ENCODE measurements at regions of chr17 and their contacts with region 1.

Region 1: DNA sequence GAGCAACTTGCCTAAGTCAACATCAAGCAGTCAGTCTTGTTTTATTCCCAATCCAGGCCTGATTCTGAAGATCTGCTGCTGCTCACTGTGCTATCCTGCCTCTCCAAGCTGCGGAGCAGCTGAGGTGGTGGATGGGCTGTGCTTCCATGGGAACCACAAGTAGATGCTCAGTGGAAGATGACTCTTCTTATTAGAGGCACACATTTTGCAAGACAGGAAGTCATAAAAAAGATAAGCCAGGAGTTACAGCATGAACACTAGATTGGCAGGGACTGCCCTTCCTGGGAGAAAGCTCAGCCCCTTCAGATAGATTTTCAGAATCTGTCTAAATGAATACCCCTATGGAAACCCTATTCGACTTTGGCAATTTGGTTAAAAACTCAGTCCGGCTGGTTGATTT is 143.1 kb downstream of the SHISA6 start:
- DNase-seq: peak; percentile 96
- H3K4me3 ChIP-seq: no peak overlapping the region
- H3K27ac ChIP-seq: peak overlapping the region; percentile 77
- H3K4me1 ChIP-seq: peaks cover 56% of the 10 kb centered on the region
- H3K27me3 ChIP-seq: no peaks in the 10 kb centered on the region
- CTCF ChIP-seq: no peak

Region 2: DNA sequence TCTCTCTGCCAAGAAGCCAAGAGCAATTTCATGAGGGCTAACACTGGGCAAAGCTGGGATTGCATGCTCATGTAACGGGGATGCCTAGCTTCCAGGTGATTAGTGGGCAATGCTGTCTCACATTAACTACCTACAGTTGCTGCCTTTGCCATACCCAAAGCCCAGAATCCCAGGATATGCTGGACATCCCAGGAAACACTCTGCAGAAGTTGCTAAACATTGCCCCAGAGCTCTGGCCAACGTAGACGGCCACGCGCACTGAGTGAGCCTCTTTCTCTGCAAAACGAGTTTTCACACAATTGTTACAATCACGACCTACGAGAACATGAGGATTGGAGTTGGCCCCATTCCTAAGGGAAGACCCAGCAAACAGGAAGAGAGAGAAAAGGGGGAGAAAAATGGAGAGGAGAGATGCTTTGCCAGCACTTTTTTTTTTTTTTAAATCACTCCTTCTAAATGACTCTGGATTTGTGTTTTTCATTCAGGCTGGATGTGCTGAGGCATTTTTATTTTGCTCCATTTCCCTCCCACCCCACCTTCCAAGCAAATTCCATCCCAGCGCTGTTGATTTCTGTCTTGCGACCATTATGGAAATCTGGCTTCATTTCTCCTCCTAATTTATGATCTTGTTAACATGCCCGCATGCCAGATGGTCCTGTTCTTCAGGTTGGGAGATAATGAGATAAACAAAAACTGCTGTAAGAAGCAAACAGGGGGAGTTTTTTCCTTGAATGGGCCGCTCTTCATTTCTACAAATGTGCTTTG is 101.4 kb after region 1 on chr17:
- CTCF ChIA-PET with region 1: no interaction called
- POLR2A ChIA-PET with region 1: no interaction called
- intact Hi-C with region 1: loop called (anchors 5 kb)
- DNase-seq: no peak
- H3K4me3 ChIP-seq: no peak overlapping the region
- H3K27ac ChIP-seq: peak overlapping the region; percentile 68
- H3K4me1 ChIP-seq: peaks cover 55% of the 10 kb centered on the region
- H3K27me3 ChIP-seq: no peaks in the 10 kb centered on the region
- CTCF ChIP-seq: no peak

Region 3: DNA sequence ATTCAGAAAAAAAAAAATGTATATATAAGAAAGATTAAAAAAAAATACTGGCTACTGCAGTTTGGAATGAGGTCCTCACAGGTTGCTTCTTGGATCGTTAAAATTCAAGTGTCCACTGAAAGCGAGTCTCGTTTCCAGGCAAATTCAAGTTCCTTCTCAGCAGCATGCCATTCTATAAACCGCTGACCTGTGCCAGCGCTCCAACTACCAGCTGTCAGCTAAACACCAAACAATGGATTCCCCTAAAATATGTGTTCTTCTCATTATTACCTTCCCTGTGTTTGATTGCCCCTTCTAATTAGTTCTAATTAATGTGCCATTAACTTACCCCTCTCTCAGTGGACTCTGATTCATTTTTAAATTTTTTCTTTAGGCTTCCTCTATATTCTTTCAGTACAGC is 306.6 kb after region 1 on chr17:
- CTCF ChIA-PET with region 1: no interaction called
- POLR2A ChIA-PET with region 1: interaction called, 15 read pairs
- intact Hi-C with region 1: no loop called
- DNase-seq: no peak
- H3K4me3 ChIP-seq: no peak overlapping the region
- H3K27ac ChIP-seq: no peak overlapping the region
- H3K4me1 ChIP-seq: no peaks in the 10 kb centered on the region
- H3K27me3 ChIP-seq: no peaks in the 10 kb centered on the region
- CTCF ChIP-seq: no peak